Activated CD4-positive, alpha-beta memory T cell treated with anti-CD3 and anti-CD28 coated beads, Interleukin-2, amount 10 ng/mL, durations not matched to agents 7 days and 5 days (primary cell): ENCODE measurements at regions of chr12 and their contacts with region 1.

Region 1: DNA sequence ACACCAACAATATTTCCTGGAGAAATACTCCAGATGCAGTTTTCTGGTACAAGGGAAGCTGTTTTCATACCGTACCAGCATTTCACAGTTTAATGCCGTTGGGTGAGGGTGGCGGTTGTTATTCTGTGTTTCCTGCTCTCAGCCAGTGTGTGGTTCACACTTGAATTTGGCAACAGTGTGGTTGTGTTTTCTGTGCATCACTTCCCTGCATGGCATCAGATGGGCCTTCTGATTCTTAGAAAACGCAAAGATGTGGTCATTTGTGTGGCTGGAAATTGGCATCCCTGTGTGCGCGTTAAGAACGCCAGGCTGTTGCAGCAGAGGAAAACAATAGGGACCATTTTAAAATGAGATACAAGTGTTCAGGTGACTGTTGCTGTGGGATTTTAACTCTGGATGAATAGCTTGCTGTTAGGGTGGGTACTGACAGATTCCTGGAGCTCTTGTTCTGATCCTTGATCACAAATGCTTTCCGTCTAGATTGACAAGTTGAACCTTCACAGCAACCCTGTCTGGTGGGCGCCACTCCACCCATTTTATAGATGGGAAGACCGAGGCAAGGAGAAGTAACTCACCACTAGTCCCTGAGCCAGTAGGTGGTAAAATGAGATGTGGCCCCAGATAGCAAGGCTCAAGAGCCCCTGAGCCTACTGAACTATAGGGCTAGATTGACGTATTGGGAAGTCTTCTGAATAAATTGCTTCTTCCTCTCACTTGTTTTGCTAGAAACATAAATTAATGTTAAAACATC is 231.2 kb downstream of the CHST11 start:
- DNase-seq: peak; percentile 84
- H3K4me3 Mint-ChIP-seq: peak overlapping the region; percentile 49
- H3K27ac Mint-ChIP-seq: peak overlapping the region; percentile 97
- H3K4me1 Mint-ChIP-seq: peaks cover 87% of the 10 kb centered on the region
- H3K27me3 Mint-ChIP-seq: no peaks in the 10 kb centered on the region

Region 2: DNA sequence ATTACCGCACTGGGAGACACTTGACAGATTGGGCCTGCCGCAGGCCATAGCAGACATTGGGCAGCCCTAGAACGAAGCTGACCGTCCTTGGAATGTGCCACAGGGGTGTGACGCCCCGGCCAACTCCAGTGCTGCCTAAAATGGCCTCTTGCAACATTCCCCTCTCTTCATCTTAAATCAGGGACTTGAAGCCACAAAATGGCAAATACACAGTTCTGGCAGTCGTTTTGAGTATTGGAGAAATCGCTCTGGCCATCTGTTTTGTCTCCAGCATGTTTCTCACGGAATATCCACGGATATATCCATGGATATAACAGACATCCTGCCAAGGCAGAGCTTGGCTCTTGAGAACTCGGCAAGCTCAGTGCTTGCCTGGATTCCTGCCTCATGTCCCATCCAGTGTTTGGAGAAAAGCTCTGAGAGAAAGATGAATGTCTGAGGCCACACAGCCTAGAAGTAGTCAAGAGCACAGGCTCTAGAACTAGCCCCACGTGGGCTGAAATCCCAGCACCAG is 72.9 kb before region 1 on chr12:
- CTCF ChIA-PET with region 1: no interaction called
- POLR2A ChIA-PET with region 1: no interaction called
- DNase-seq: no peak
- H3K4me3 Mint-ChIP-seq: no peak overlapping the region
- H3K27ac Mint-ChIP-seq: no peak overlapping the region
- H3K4me1 Mint-ChIP-seq: peaks cover 23% of the 10 kb centered on the region
- H3K27me3 Mint-ChIP-seq: no peaks in the 10 kb centered on the region

Region 3: DNA sequence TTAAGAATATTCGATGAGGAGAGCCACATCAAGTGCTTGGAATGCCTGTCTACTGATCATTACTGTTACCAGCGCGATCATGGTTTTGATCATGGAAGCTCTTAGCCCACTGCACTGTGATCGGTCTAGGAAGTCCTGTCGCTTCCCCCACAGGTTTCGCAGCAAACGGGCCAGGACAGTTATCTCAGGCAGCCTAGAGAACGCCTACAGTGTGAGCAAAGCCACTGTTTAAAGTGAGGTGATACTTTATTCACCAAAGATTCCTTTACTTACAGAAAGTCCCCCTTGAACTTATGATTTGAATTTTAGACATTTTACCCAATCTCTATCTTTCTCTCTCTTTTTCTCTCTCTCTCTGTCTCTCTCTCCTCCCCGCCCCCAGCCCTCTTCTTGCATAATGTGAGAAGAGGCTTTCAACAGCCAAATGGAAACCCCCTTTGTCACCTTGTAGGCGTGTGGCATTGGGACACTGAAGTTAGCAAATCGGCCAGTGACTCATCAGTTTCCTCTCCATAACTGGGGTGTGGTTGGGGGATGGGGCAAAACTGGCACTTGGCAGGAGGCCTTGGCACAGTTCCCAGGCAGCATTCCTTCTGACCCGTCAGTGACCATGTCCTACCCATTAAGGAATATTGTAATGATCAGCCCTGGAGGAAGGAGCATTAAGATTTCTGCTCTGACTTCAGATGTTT is 16.4 kb before region 1 on chr12:
- CTCF ChIA-PET with region 1: interaction called, 4 read pairs
- POLR2A ChIA-PET with region 1: interaction called, 33 read pairs
- DNase-seq: peak; percentile 81
- H3K4me3 Mint-ChIP-seq: peak overlapping the region; percentile 45
- H3K27ac Mint-ChIP-seq: peak overlapping the region; percentile 78
- H3K4me1 Mint-ChIP-seq: peaks cover 52% of the 10 kb centered on the region
- H3K27me3 Mint-ChIP-seq: no peaks in the 10 kb centered on the region

Region 4: DNA sequence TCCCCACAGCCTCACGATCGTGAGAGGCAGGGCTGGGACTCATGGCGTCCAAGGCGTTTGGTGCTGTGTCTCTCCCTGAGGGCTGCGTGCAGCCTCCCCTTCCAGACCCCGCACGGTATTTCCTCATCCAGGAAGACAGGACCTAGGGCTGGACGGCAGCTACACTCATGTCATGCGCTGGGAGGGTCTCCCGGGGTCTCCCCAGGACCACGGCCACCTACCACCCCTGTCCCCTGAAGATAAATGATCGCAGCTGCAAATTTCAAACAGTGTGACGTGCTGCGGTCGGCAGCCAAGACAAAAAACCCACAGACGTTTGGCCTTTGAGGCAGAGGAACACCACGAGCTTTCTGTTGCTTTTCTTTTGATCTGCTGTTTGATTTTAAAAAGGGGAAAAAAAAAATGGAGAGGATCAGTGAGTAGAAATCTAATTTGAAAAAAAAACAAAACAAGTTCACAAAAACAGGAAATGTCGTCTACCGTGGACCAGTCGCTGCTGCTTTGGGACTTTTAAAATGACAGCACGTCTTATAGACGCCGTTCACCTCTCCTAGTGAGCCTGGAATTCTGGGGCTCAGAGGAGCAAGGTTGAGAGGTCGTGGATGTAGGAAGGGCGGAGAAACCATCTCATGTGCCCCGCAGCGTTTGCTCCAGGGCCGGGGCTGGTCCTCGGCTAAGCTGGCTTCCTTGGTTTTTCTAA is 32.5 kb after region 1 on chr12:
- CTCF ChIA-PET with region 1: interaction called, 4 read pairs
- POLR2A ChIA-PET with region 1: interaction called, 16 read pairs
- DNase-seq: peak; percentile 75
- H3K4me3 Mint-ChIP-seq: peak overlapping the region; percentile 67
- H3K27ac Mint-ChIP-seq: peak overlapping the region; percentile 86
- H3K4me1 Mint-ChIP-seq: peaks cover 41% of the 10 kb centered on the region
- H3K27me3 Mint-ChIP-seq: no peaks in the 10 kb centered on the region